Left colon (tissue), 2 donors: ENCODE measurements at regions of chr11 and their contacts with region 1.

Region 1: GRCh38 chr11:88543902-88544655 is 206.5 kb upstream of the CTSC start:
- DNase-seq: peak; percentile 61 to 81
- ATAC-seq: peak; percentile 100

Region 2: DNA sequence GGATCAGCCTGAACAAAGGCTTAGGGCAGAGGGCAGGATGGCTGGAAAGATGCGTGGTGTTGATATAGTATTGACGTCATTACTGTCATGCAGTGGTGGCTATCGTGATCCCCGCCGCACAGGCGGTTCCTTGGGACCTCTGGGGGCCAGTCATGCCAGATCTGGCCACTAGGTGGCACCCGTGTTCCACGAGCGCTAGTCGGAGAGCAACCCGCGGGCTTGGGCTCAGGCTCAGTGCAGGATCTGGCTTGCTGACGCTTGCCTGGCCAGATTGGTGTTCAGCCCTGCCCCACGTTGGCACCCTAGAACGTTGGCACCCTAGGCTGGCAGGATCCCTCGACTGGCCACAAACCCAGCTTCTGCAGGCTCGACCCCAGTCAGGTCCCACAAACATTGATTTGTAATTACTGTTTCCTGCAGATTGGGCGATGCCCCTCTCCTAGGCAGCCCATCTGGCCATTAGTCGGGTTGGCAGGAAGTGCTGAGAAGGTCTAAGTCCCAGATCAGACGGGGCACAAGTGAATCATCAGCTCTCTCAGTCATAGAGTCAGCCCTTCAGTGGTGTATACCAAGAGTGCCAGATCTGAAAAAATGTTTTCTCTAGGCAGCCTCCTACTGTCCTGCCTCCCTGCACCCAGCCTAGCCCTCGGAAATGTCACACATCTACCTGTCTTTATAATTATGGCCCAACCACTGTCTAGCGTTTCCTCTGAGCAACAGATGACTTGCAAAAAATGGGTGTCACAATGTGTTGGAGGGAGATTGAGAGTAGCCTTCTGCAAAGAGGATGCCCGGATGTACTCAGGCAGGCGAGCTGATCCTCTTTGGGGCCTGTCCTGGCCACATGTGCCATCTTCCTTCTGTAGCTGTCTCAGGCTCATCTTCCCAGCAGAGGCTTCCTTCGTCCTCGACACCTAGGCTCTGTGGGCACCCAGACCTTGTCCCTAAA is 1191.0 kb before region 1 on chr11:
- intact Hi-C with region 1: loop called in 1 of 2 experiments (anchors 10 kb)
- DNase-seq: peak; percentile 66 to 89
- ATAC-seq: peak; percentile 79

Region 3: GRCh38 chr11:88231894-88232482 is 312.1 kb before region 1 on chr11:
- intact Hi-C with region 1: loop called in 1 of 2 experiments (anchors 5 kb)
- DNase-seq: no peak
- ATAC-seq: peak; percentile 75